ENCODE measurements at regions of chr19 and their contacts with region 1.

Region 1: GRCh38 chr19:38831142-38831605 is 420 bp downstream of the ECH1 start:
- DNase-seq: peak; percentile 74
- CTCF ChIP-seq: no peak

Region 2: GRCh38 chr19:38707512-38708114 is 123.6 kb before region 1 on chr19:
- CTCF ChIA-PET with region 1: no interaction called
- POLR2A ChIA-PET with region 1: no interaction called
- DNase-seq: no peak
- CTCF ChIP-seq: no peak

Region 3: GRCh38 chr19:38786572-38787265 is 44.5 kb before region 1 on chr19:
- CTCF ChIA-PET with region 1: no interaction called
- POLR2A ChIA-PET with region 1: no interaction called
- DNase-seq: no peak
- CTCF ChIP-seq: no peak

Region 4: GRCh38 chr19:38842439-38843174 is 11.4 kb after region 1 on chr19:
- CTCF ChIA-PET with region 1: interaction called, 5 read pairs
- POLR2A ChIA-PET with region 1: interaction called, 20 read pairs
- DNase-seq: no peak
- CTCF ChIP-seq: no peak

Region 5: DNA sequence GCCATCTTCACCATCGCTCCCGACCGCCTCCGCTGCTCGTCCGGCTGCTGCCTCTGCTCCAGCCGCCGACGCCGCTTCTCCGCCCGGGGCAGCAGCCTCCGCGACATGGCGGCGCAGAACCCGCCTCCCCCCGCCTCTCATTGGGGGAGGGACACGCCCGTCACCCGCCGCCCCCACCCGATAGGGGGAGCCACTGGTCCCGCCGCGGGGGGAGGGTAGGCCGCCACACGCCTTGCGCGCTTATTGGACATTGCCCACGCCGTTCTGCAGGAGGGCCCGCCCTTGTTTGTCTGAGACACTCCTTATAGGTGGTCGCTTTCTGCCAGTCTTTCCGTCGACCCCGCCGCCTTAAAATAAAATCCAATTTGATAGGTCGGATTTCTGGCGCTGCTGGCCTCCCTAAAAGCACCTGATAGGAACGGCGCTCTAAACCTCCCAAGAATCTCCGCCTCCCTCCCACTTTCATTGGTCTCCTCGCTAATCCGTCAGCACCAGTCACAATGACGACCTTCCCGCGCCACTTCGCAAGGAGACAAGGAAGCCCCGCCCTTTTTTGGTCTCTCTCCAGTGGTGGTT is 18.8 kb after region 1 on chr19 and contains the start of gene HNRNPL:
- CTCF ChIA-PET with region 1: interaction called, 4 read pairs
- POLR2A ChIA-PET with region 1: interaction called, 20 read pairs
- DNase-seq: peak; percentile 94
- CTCF ChIP-seq: peak; percentile 36

Measured in GM10248 (cell line).